Heart left ventricle (tissue), 16 donors: ENCODE measurements at regions of chr3 and their contacts with region 1.

Region 1: GRCh38 chr3:32138545-32139104 is 32.2 kb downstream of the GPD1L start:
- DNase-seq: no peak
- ATAC-seq: peak in 1 of 4 donors; percentile 31
- H3K4me3 ChIP-seq: no peak overlapping the region
- H3K27ac ChIP-seq: no peak overlapping the region
- H3K4me1 ChIP-seq: peaks cover 0 to 34% (median 9%) of the 10 kb centered on the region in 12 donors
- H3K27me3 ChIP-seq: no peaks in the 10 kb centered on the region
- CTCF ChIP-seq: no peak
- POLR2A ChIP-seq: no peak

Region 2: GRCh38 chr3:32037929-32038267 is 100.7 kb before region 1 on chr3:
- intact Hi-C with region 1: loop called in 1 of 10 experiments (anchors 5 kb)
- DNase-seq: no peak
- ATAC-seq: no peak
- H3K4me3 ChIP-seq: no peak overlapping the region
- H3K27ac ChIP-seq: no peak overlapping the region
- H3K4me1 ChIP-seq: peaks cover 0 to 8% (median 0%) of the 10 kb centered on the region in 12 donors
- H3K27me3 ChIP-seq: no peaks in the 10 kb centered on the region
- CTCF ChIP-seq: no peak
- POLR2A ChIP-seq: no peak